KBM-7 (cell line): ENCODE measurements at regions of chrX and their contacts with region 1.

Region 1: DNA sequence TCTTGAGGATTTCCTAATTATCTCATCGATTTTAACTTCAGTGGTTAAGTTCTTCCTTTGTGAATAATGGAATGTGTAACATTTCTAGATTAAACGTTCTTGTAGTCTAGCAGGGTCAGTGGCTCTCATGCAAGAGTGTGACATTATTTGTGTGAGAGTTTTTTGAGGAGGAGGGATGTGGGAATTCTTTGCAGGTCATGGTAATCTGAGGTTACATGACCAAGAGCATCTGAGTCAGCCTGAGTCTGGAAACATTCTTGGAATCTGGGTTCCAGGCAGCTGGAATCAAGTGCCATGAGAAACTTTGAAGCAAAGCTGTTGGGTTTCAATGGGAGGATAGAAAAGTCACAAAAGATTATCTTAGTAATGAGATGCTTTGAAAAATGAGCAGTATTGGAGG is 49.5 kb downstream of the GK start:
- DNase-seq: no peak

Region 2: DNA sequence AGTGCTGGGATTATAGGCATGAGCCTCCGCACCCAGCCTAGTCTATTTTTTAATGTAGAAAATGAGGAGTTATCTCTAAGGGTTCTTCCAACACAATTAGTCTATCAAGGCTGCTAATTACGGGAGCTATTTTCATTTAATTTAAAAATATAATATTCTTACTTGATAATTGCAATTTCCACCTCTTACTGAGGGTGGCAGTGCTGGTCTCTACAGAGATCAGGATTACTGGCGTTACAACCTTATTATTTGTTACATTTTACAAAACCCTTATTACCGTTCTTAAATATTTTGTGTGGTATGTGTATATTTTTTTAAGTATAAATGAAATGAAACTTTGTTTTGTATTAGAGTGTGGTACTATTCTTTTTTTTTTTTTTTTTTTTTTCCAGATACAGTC is 67.1 kb before region 1 on chrX:
- in situ Hi-C with region 1: loop called (anchors 10 kb)
- DNase-seq: peak; percentile 40